ENCODE measurements at regions of chr7 and their contacts with region 1.

Region 1: DNA sequence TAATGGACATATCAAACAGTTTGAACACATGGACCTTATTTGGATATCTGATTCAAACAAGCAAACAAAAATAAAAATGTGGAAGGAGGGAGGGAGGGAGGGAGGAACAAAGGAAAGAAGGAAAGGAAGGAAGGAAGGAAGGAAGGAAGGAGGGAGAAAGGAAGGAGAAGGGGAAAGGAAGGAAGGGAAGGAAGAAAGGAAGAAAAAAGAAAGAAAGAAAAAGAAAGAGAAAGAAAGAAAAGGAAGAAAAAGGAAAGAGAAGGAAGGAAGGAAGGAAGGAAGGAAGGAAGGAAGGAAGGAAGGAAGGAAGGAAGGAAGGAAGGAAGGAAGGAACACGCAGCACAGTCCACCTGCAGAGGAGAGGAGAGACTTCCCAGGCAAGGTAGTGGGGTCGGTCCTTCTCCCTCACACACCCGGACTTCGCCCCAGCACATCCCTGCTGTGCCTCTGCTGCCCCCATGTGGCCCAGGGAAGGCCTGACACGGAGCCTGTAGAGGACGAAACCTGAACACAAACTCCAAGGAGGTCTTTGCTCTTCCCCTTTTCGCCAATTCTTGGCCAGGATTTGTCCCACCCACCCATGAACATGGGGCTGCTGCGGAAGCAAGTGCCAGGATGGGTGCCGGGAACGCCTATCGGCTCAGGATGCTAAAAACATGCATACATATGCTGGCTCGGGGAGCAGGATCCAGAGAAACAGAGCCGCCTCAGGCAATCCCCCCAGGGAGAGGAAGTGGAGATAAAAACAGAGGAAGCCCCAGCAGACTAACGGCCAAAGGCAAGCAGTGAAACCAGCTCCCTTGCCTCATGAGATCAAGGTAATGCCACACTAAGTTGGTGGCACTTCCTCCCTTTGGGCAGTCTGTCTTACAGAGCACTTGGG is 52.3 kb upstream of the DGKI start:
- DNase-seq: peak; percentile 88 to 90
- H3K4me3 ChIP-seq: no peak overlapping the region
- H3K27ac ChIP-seq: peak overlapping the region; percentile 8 to 49
- H3K4me1 ChIP-seq: peaks cover 0 to 26% (median 14%) of the 10 kb centered on the region in 4 donors
- H3K27me3 ChIP-seq: no peaks in the 10 kb centered on the region
- CTCF ChIP-seq: peak; percentile 93 to 94

Region 2: DNA sequence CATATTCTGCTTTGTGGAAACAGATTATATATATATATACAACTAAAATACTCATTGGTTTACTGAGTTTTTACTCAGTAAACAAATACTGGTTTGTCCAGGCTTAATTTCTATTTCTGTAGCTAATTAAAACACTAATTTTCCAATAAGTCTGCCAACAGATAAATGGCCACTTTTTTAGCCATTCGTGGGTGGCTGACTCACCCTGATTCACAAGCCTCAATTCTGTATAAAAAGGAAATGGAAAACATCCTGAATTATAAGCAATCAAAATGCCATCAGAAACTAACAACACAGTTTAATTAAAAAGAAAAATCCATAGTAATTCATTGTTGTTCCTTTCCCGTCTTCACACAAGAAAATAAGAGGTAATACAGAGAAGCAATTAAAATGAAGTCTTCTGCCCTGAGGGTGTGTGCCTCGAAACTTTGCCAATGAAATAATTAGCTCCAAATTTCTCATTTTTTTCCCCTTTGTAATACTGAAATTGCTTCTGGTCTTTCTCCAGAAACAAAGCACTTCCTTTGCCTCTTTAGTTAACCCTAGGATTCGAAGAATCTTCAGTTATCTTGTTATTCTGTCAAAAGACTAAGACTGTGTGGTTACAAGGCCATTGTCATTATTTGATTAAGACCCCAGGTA is 436.9 kb before region 1 on chr7:
- intact Hi-C with region 1: no loop called
- DNase-seq: no peak
- H3K4me3 ChIP-seq: no peak overlapping the region
- H3K27ac ChIP-seq: no peak overlapping the region
- H3K4me1 ChIP-seq: no peaks in the 10 kb centered on the region
- H3K27me3 ChIP-seq: no peaks in the 10 kb centered on the region
- CTCF ChIP-seq: no peak

Region 3: GRCh38 chr7:137656227-137656849 is 242.7 kb before region 1 on chr7:
- intact Hi-C with region 1: loop called (anchors 2 kb)
- DNase-seq: peak; percentile 83 to 84
- H3K4me3 ChIP-seq: no peak overlapping the region
- H3K27ac ChIP-seq: peak overlapping the region in 1 of 2 donors; percentile 41
- H3K4me1 ChIP-seq: peaks cover 0 to 12% (median 0%) of the 10 kb centered on the region in 4 donors
- H3K27me3 ChIP-seq: no peaks in the 10 kb centered on the region
- CTCF ChIP-seq: peak; percentile 80 to 83

Region 4: DNA sequence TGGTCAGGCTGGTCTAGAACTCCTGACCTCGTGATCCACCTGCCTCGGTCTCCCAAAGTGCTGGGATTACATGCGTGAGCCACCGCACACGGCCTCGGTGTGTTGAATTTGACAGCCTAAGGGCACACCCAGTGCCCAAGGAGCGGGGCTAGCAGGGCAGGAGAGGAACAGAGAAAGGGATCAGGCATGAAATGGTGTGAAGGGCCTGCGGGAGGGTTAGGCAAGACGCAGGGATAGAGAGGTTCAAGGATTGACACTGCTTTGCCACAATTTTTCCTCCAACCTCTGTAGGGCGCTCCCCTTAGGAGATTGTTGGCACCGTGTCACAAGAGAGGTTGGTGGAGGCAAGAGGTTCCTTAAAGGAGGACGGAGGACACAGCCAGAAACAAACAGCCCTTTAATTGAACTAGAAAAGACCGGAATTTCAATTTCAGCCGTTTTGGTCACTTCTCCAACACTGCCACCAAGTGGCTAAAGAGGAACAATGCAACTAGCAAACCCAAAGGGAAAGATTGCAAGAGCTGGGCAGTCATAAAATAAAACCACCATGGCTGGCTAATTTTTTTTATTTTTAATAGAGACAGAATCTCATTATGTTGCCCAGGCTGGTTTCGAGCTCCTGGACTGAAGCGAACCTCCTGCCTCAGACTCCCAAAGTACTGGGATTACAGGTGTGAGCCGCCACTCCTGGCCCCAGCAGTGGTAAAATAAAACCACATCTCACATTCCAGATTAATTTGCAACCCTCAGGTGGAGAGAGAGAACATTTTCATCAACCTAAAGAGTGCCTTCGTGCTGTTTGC is 109.7 kb after region 1 on chr7:
- intact Hi-C with region 1: loop called (anchors 1 kb)
- DNase-seq: no peak
- H3K4me3 ChIP-seq: no peak overlapping the region
- H3K27ac ChIP-seq: peak overlapping the region in 1 of 2 donors; percentile 4
- H3K4me1 ChIP-seq: peaks cover 0 to 4% (median 1%) of the 10 kb centered on the region in 4 donors
- H3K27me3 ChIP-seq: peaks cover 0 to 3% of the 10 kb centered on the region in 2 donors
- CTCF ChIP-seq: peak; percentile 84 to 89